HEK293 (cell line): ENCODE measurements at regions of chr5 and their contacts with region 1.

Region 1: DNA sequence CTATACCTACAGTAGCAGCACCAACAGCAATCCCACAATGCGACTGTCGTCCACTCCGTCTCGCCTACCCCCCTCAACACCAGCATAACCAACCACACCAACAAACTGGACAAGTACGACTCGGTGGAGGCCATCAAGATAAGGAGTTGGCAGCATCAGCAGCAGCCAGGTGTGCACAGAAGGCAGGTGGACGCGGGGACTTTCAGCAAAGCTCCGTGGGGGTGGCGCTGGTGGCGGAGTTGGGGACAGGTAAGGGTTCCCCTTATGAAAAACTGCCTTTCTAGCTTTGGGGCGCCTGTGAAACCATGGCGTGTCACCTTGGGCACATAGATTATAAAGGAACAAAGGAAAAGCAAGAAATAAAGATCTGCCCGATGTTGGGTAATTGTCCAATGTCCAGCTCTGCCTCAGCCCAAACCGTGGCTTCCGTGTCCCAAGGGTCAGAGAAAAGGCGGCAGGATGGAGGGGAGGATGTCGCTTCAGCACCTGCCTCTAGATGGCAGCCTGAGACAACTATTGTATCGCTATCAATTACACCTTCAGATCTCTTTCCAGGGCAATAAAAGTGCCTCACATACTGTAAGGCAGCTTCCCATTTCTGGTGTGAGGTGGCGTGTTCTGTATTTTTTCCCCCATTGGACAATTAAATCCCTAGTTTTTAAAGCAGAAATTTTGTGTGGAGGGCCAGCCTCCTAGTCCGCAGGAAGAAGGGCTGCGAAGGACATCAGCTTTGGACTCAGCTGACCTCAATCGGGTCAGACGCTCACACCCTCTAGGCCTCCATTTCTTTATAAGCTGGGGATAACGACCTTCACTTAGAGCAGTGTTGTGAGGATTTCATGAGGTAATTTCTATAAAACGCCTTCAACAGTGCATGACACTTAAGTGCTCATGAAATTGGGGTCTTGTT is 58.8 kb downstream of the MTRR start:
- H3K4me3 ChIP-seq: no peak overlapping the region
- H3K27ac ChIP-seq: no peak overlapping the region
- H3K4me1 ChIP-seq: no peaks in the 10 kb centered on the region; the same call in 1 of the 2 replicates
- CTCF ChIP-seq: peak; percentile 62

Region 2: DNA sequence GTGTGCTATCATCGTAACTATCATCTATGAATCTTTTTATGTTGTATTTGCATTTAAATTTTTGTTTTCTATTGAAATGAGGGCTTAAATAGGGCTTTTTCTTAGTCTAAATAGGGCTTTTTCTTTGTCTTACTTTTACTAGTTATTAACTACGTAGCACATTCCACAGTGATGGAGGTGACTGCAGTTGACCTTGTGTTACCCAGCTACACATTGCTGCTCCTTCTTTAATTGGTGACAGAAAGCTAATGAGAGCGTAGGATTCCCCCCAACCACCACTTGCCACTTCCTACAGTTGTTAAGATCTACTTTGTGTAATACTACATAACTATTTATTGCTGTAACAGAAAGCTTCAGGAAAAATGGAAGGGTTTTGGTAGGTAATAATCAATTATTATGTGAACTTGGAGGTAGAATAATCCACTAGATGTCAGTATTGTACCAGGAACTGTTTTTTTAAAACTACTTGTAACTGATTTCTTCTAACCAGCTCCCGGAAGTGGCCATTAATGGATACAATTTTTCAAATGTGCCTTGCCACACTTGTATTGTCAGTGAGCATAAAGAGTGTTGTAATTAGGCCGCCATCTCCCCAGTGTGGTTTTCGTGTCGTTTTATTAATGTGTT is 40.8 kb before region 1 on chr5:
- CTCF ChIA-PET with region 1: interaction called, 15 read pairs
- POLR2A ChIA-PET with region 1: no interaction called
- H3K4me3 ChIP-seq: no peak overlapping the region
- H3K27ac ChIP-seq: no peak overlapping the region
- H3K4me1 ChIP-seq: no peaks in the 10 kb centered on the region
- CTCF ChIP-seq: 0 out of 2 replicates have a peak, but pooled peaks have one; percentile 11

Region 3: DNA sequence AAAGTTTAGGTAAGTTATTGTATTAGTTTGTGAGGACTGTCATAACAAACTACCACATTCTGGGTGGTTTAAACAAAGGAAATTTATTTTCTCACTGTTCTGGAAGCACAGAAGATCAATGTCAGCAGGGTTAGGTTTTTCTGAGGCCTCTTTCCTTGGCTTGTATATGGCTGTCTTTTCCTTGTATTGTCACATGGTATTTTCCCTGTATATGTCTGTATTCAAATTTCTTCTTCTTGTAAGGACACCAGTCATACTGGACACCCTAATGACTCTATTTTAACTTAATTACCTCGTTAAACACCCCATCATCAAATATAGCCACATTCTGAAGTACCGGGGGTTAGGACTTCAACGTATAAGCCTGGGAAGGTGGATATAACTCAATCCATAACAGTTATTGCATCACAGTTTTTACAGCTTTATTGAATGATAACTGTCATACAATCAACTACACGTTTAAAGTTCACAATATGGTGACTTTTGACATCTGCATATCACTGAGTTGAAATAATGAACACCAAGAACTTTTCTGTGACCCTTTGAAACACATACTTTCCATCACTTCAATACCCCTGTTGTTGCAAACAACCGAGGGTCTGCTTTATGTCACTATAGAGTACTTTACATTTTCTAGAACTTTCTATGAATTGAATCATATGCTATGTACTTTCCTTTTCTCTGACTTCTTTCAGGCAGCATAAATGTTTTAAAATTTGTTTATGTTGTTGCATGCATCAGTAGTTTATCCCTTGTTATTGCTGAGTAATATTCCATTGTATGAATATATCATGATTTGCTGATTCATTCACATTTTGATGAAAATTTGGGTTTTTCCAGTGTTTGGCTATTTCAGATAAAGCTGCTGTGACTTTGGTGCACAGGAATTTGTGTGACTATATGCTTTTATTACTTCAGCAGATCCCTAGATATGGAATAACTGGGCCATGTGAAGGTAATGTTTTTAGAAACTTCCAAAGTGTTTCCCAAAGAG is 10.3 kb before region 1 on chr5:
- CTCF ChIA-PET with region 1: interaction called, 22 read pairs
- POLR2A ChIA-PET with region 1: no interaction called
- H3K4me3 ChIP-seq: no peak overlapping the region
- H3K27ac ChIP-seq: no peak overlapping the region
- H3K4me1 ChIP-seq: no peaks in the 10 kb centered on the region
- CTCF ChIP-seq: no peak

Region 4: GRCh38 chr5:7941692-7942091 is 14.0 kb after region 1 on chr5:
- CTCF ChIA-PET with region 1: interaction called, 11 read pairs
- POLR2A ChIA-PET with region 1: no interaction called
- H3K4me3 ChIP-seq: no peak overlapping the region
- H3K27ac ChIP-seq: no peak overlapping the region
- H3K4me1 ChIP-seq: no peaks in the 10 kb centered on the region
- CTCF ChIP-seq: no peak

Region 5: GRCh38 chr5:8057769-8058168 is 130.0 kb after region 1 on chr5:
- CTCF ChIA-PET with region 1: no interaction called
- POLR2A ChIA-PET with region 1: no interaction called
- H3K4me3 ChIP-seq: no peak overlapping the region
- H3K27ac ChIP-seq: no peak overlapping the region
- H3K4me1 ChIP-seq: no peaks in the 10 kb centered on the region
- CTCF ChIP-seq: no peak

Region 6: DNA sequence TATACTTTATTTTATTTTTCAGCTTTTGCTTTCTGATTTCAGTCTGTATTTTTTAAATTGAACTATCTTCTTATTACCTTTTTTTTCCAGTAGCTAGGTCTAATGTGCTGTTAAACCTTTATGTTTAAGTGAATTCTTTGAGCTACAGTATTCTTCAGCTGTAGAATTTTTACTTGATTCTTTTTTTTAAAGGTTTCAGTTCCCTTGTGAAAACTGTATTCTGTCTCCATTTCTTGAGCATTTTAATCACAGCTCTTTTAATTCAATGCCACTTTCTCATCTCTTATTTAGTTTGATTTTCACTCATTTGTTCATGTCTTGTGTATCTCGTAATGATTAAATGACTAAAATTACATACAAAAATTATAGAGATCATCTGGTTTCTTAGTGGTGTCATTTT is 175.0 kb after region 1 on chr5:
- CTCF ChIA-PET with region 1: no interaction called
- POLR2A ChIA-PET with region 1: no interaction called
- H3K4me3 ChIP-seq: no peak overlapping the region
- H3K27ac ChIP-seq: no peak overlapping the region
- H3K4me1 ChIP-seq: no peaks in the 10 kb centered on the region
- CTCF ChIP-seq: no peak

Region 7: GRCh38 chr5:9207817-9208418 is 1280.2 kb after region 1 on chr5:
- CTCF ChIA-PET with region 1: interaction called, 12 read pairs
- POLR2A ChIA-PET with region 1: no interaction called
- H3K4me3 ChIP-seq: no peak overlapping the region
- H3K27ac ChIP-seq: no peak overlapping the region
- H3K4me1 ChIP-seq: no peaks in the 10 kb centered on the region
- CTCF ChIP-seq: peak; percentile 22; the same call in 1 of the 2 replicates